ENCODE measurements at regions of chr12 and their contacts with region 1.

Region 1: DNA sequence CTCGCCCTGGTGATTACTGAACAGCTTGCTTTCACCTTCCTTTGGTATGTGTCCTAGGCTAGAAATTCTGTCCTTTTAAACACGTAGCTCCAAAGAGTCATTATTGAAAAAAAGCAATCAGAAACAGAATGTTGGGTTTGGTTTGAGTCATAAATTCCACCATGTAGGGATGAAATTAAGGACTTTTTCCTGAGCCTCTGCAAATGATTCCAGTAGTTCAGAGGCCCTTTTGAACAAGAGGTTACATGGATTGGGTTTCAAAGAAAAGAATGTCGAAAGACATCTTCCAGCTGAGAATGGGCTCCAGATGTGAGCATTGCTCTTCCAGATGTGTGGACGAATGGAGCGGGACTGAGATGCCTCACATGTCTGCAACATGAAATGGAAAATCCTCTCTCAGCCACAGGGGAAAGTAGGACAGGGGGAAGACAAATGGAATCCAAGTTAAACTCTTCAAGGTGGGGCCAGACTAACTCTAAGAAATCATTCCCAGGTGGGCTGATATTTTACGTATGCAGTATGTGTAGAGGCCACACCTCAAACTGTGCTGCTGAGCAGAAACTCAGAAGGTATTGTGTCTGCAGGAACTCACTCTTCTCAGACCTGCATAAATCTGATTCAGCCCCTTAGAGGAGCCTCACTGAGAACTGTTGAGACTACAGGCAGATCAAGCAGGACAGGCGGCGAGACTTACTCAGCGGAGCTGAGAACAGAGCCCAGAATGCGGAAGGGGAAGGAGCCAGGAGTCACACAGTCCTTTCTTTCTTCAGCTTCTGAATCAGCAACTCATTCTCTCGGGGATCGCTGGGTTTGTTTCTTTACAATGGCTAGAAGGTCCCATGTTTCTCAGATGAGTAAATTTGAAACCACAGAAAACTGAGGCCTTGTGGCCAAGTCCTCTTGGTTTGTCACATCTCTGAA is 23.3 kb upstream of the EMP1 start:
- DNase-seq: peak in 1 of 2 donors; percentile 96
- H3K4me3 ChIP-seq: no peak overlapping the region
- H3K27ac ChIP-seq: peak overlapping the region; percentile 76
- H3K4me1 ChIP-seq: peaks cover 52% of the 10 kb centered on the region
- H3K27me3 ChIP-seq: no peaks in the 10 kb centered on the region
- CTCF ChIP-seq: no peak
- POLR2A ChIP-seq: no peak

Region 2: DNA sequence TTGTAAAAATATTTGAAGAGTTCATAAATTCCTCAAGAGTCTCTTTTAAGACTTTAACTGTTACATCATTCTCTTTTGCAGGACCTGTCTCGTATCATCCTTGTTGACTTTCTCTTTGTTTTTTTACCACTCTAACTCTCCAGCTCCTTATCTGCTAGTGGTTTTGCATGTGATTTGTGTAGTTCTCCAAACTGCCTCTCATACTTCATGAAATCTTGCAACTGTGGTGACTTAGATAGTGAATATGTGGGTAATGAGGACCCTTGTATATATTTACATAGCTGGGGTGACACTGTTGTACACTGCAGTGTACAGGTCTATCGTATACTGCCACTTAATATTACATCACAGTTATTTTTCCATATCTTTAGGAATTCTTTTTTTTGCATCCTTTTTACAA is 17.0 kb before region 1 on chr12:
- intact Hi-C with region 1: loop called (anchors 2 kb)
- DNase-seq: no peak
- H3K4me3 ChIP-seq: no peak overlapping the region
- H3K27ac ChIP-seq: no peak overlapping the region
- H3K4me1 ChIP-seq: peaks cover 7% of the 10 kb centered on the region
- H3K27me3 ChIP-seq: no peaks in the 10 kb centered on the region
- CTCF ChIP-seq: no peak
- POLR2A ChIP-seq: no peak

Measured in vagina (tissue), 2 donors.